HepG2 (cell line): ENCODE measurements at regions of chr3 and their contacts with region 1.

Region 1: DNA sequence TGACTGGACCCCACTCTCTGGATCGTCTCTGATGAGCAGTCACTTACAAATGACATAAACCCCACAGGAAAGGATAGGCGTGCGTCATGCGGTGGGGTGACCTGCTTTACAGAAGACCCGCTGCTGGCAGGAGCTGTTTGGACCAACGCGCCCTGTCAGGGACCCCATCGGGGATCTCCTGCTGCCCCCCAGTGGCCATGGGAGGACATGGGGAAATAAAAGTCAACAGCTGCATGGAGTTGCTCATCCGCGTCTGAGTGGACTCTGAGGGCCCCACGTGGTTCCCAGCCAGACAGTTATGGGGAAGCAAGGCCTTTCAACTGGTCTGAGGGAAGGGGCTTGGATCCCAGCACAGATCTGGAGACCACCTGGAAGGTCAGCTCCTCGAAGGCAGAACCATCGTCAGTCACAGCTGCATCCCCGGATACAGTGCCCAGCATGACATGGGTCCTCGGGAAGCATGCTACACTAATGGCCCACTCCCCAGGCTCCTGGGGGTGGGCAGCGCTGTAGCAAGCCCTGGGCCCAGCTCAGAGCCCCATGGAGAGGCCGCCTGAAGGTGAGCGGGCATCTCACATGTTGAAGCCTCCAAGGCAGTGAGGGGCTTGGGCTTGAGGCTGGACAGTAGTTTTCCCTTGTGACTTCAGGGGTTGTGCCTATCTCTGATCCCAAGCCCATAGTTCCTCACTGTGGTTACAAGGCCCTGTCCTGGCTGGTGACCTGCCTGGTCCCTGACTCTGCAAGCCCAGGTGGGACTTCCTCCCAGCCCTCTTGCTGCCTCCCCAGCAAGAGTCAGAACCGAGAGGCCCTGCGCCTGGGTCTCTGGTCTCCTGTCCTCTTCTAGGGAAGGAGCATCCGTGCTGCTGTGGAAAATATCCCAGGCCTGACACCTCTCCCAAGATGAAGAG is 32.3 kb downstream of the PTH1R start:
- DNase-seq: peak; percentile 75
- ATAC-seq: peak; percentile 88
- H3K4me3 ChIP-seq: peak overlapping the region in 1 of 3 experiments; percentile 22; a peak in 1 of 6 replicates
- H3K27ac ChIP-seq: no peak overlapping the region
- H3K4me1 ChIP-seq: peaks cover 10% of the 10 kb centered on the region
- H3K27me3 ChIP-seq: peaks cover 0 to 23% of the 10 kb centered on the region in 2 experiments; a peak in 3 of 5 replicates
- CTCF ChIP-seq: peak; percentile 95
- EP300 ChIP-seq: no peak
- POLR2A ChIP-seq: no peak
- RAD21 ChIP-seq: peak; percentile 88

Region 2: GRCh38 chr3:46705022-46705530 is 204.7 kb before region 1 on chr3:
- CTCF ChIA-PET with region 1: interaction called, 17 read pairs
- POLR2A ChIA-PET with region 1: no interaction called
- in situ Hi-C with region 1: loop called (anchors 5 kb)
- intact Hi-C with region 1: loop called (anchors 1 kb)
- DNase-seq: peak; percentile 63
- ATAC-seq: peak; percentile 91
- H3K4me3 ChIP-seq: no peak overlapping the region
- H3K27ac ChIP-seq: no peak overlapping the region
- H3K4me1 ChIP-seq: no peaks in the 10 kb centered on the region
- H3K27me3 ChIP-seq: peaks cover 1 to 12% of the 10 kb centered on the region in 2 experiments; a peak in 2 of 5 replicates
- CTCF ChIP-seq: peak; percentile 96
- EP300 ChIP-seq: no peak
- POLR2A ChIP-seq: no peak
- RAD21 ChIP-seq: peak; percentile 93

Region 3: DNA sequence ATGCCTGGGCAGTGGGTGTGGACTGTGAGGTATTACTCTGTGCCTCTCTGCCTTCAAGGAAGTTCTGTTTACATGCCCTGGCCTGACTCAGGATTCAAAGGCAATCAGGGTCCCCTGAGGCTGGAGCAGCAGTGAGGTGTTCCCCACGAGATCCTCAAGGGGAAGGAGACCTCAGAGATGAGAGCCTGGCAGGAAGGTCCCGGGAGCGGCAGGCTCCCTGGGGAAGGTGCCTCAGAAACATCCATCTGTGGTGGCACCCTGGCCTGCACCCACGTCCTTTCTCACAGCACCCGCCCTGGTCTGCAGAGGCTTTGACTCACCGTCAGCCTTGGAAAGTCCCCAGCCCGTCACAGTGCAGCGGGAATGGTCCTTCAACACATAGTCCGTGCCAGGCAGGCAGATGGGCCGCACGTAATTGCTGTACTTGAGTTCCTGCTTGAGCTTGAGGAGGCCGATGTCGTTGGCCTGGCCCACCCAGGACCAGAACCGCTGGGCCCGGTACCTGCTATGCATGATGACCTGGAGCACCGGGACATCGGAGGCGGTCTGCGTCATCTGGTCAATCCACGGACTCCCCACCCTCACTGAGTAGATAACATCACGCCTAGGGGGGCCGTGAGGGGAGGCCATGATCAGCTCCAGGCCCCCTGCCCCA is 195.8 kb before region 1 on chr3:
- CTCF ChIA-PET with region 1: no interaction called
- POLR2A ChIA-PET with region 1: no interaction called
- in situ Hi-C with region 1: loop called (anchors 5 kb)
- intact Hi-C with region 1: no loop called
- DNase-seq: no peak
- ATAC-seq: no peak; the same call in 2 of the 3 replicates
- H3K4me3 ChIP-seq: no peak overlapping the region
- H3K27ac ChIP-seq: no peak overlapping the region
- H3K4me1 ChIP-seq: peaks cover 11% of the 10 kb centered on the region
- H3K27me3 ChIP-seq: peaks cover 1 to 10% of the 10 kb centered on the region in 2 experiments; a peak in 3 of 5 replicates
- CTCF ChIP-seq: no peak
- EP300 ChIP-seq: no peak
- POLR2A ChIP-seq: no peak
- RAD21 ChIP-seq: no peak

Region 4: GRCh38 chr3:46866720-46867549 is 42.9 kb before region 1 on chr3:
- CTCF ChIA-PET with region 1: interaction called, 15 read pairs
- POLR2A ChIA-PET with region 1: no interaction called
- in situ Hi-C with region 1: loop called (anchors 5 kb)
- intact Hi-C with region 1: loop called (anchors 1 kb)
- DNase-seq: peak; percentile 39
- ATAC-seq: peak; percentile 60
- H3K4me3 ChIP-seq: no peak overlapping the region
- H3K27ac ChIP-seq: no peak overlapping the region
- H3K4me1 ChIP-seq: peaks cover 49% of the 10 kb centered on the region
- H3K27me3 ChIP-seq: peaks cover 3 to 14% of the 10 kb centered on the region in 2 experiments; a peak in 3 of 5 replicates
- CTCF ChIP-seq: peak; percentile 86
- EP300 ChIP-seq: no peak
- POLR2A ChIP-seq: no peak
- RAD21 ChIP-seq: peak; percentile 60; the same call in 1 of the 2 replicates